HEK293 (cell line): ENCODE measurements at regions of chr6 and their contacts with region 1.

Region 1: DNA sequence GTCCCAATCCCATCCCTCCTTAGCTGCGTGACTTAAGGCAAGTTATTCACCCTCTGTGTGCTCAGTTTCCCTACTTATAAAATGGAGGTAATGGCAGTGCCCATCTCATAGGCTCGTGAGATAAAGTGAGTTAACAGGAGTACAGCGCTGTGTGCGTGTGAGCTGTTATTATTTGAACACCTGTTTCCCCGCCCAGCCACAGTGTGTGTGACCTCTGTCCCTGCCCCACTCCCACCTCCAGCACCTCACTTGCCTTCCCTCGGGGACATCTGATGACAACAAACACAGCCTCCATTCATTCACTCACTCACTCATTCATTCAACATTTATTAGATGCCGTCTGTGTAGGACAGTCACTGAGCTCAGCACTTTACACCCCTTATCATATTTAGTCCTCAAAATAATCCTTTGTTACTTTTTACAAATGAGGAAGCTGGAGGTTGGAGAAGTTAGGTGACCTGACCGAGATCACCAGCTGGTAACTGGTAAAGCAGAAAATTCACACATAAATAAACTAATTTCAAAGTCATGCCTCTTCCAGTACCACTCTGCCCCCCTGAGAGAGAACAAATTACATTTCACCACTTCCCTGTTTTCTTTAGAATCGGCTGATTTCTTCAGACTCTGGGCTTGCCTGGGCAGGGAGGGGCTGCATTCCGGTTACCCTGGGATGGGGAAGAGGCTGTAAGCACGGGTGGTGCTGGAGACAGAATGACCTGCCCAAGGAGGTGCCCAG is 58.6 kb downstream of the CPNE5 start:
- H3K4me3 ChIP-seq: no peak overlapping the region
- H3K27ac ChIP-seq: no peak overlapping the region
- H3K4me1 ChIP-seq: no peaks in the 10 kb centered on the region
- CTCF ChIP-seq: no peak

Region 2: DNA sequence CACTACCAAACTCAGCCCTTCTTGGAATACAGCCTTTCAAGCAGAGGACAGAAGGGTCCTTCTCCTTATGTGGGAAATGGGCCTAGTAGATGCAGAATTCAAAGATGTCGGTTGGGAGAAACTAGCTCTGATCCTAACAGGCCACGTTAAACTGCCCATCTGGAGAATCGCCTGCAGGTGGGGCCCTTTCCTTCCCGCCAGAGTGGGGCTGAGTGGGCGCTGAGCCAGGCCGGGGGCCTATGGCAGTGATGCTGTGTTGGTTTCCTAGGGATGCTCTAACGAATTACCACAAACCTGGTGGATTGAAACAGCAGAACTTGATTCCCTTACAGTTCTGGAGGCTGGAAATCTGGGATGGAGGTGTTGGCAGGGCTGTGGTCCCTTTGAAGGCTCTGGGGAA is 641.2 kb before region 1 on chr6:
- CTCF ChIA-PET with region 1: no interaction called
- POLR2A ChIA-PET with region 1: no interaction called
- H3K4me3 ChIP-seq: no peak overlapping the region
- H3K27ac ChIP-seq: no peak overlapping the region
- H3K4me1 ChIP-seq: no peaks in the 10 kb centered on the region
- CTCF ChIP-seq: peak; percentile 50; the same call in 1 of the 2 replicates

Region 3: GRCh38 chr6:36793913-36794712 is 13.5 kb after region 1 on chr6:
- CTCF ChIA-PET with region 1: interaction called, 48 read pairs
- POLR2A ChIA-PET with region 1: no interaction called
- H3K4me3 ChIP-seq: no peak overlapping the region
- H3K27ac ChIP-seq: no peak overlapping the region
- H3K4me1 ChIP-seq: no peaks in the 10 kb centered on the region
- CTCF ChIP-seq: no peak

Region 4: GRCh38 chr6:36809941-36810803 is 29.6 kb after region 1 on chr6:
- CTCF ChIA-PET with region 1: interaction called, 25 read pairs
- POLR2A ChIA-PET with region 1: no interaction called
- H3K4me3 ChIP-seq: no peak overlapping the region
- H3K27ac ChIP-seq: no peak overlapping the region
- H3K4me1 ChIP-seq: no peaks in the 10 kb centered on the region
- CTCF ChIP-seq: peak; percentile 21; the same call in 1 of the 2 replicates